ENCODE measurements at regions of chr12 and their contacts with region 1.

Region 1: DNA sequence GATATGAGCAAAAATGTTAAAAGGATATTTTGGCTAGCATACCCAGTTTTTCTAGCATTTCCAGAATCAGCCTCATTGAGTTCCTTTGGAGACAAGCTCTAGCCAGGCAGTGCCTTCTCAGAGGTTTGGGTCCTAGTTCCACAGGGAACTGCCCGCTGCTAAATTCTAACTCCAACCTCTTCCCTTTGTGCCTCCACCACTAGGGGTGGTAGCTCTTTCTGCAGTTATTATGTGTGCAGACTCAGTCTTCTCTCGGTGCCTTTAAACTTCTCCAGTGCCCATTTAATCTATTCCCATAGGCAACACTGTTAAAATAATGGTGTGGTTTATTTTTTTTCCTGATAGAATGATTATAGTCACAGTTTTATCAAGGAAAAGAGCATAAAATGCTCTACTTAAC is 21.5 kb upstream of the SLC25A3 start:
- DNase-seq: no peak
- H3K4me3 ChIP-seq: no peak overlapping the region
- H3K27me3 ChIP-seq: no peaks in the 10 kb centered on the region
- CTCF ChIP-seq: no peak; the same call in 1 of the 2 replicates

Region 2: DNA sequence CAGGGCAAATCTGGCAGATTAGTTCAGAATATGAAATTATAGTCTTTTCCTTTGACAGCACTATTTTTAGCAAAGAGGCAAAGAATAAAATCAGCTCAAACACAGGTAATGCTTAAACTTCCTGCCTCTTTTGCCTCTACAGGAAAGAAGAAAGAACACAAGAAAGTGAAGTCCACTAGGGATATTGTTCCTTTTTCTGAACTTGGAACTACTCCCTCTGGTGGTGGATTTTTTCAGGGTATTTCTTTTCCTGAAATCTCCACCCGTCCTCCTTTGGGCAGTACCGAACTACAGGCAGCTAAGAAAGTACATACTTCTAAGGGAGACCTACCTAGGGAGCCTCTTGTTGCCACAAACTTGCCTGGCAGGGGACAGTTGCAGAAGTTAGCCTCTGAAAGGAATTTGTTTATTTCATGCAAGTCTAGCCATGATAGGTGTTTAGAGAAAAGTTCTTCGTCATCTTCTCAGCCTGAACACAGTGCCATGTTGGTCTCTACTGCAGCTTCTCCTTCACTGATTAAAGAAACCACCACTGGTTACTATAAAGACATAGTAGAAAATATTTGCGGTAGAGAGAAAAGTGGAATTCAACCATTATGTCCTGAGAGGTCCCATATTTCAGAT is 39.2 kb before region 1 on chr12:
- CTCF ChIA-PET with region 1: interaction called, 11 read pairs
- POLR2A ChIA-PET with region 1: no interaction called
- DNase-seq: no peak
- H3K4me3 ChIP-seq: no peak overlapping the region
- H3K27me3 ChIP-seq: no peaks in the 10 kb centered on the region
- CTCF ChIP-seq: peak; percentile 58

Region 3: GRCh38 chr12:98550803-98551202 is 21.2 kb before region 1 on chr12:
- CTCF ChIA-PET with region 1: interaction called, 10 read pairs
- POLR2A ChIA-PET with region 1: no interaction called
- DNase-seq: no peak
- H3K4me3 ChIP-seq: no peak overlapping the region
- H3K27me3 ChIP-seq: no peaks in the 10 kb centered on the region
- CTCF ChIP-seq: no peak

Region 4: DNA sequence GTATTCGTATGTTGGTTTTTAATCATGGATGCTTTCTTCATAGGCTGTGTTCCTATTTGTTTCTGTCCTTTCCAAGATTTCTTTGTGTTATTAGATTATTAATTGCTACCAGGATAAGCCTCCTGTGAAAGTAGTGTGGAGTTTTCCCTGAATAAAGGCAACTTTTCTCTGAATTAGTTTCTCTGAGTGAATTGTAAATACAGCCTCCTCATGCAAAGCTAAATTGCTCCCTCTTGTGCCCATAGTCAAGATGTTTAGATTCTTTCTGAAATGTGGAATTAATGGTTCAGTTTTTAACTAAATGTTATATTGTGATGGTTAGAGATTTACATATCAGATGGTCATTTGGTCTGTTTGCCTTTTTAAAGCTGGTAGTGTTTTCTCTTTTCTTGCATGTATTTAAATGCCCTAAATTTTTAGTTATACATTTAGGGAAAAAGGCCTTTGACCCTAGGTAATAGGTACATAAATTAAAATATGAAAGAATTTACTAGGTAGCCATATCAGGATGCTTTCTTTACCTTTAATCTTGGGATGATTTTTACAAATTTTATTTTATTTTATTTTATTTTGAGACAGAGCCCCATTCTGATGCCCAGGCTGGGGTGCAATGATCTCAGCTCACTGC is 82.0 kb after region 1 on chr12:
- CTCF ChIA-PET with region 1: interaction called, 18 read pairs
- POLR2A ChIA-PET with region 1: no interaction called
- DNase-seq: no peak
- H3K4me3 ChIP-seq: no peak overlapping the region
- H3K27me3 ChIP-seq: no peaks in the 10 kb centered on the region
- CTCF ChIP-seq: peak; percentile 62

Region 5: GRCh38 chr12:98998697-98999299 is 426.8 kb after region 1 on chr12:
- CTCF ChIA-PET with region 1: interaction called, 11 read pairs
- POLR2A ChIA-PET with region 1: no interaction called
- DNase-seq: no peak
- H3K4me3 ChIP-seq: no peak overlapping the region
- H3K27me3 ChIP-seq: no peaks in the 10 kb centered on the region
- CTCF ChIP-seq: peak; percentile 58

Region 6: DNA sequence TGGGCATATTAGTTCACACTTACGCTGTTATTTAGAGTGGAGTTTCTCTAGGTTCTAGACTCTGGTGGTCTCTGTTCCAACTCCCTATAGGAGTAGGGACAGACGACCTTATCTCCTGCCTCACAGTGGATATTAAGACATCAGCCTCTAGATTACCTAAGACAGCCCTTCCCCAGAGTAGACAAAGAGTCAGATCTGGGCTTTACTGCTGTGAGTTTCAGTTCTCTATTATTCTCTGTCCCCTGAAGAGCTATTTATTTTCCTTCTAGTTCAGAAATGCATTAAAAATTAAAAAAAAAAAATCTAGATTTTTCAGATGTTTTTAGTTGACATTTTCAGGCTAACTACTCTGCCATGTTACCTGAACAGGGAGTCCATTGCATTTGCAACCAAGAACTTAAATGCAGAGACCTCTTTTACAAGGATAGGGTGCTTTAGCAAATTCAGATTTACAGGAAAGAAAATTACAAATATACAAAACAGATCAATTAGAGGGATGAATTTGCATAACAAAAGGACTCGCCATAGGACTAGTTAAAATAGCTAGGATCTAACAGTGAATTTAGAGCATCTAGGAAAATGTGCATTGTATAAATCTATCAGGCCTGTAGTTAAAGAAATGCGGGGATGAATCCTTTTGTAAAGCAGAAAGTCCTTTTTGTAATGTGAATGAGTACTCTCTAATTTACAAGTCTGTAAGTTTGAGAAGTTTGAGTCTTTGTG is 454.5 kb after region 1 on chr12:
- CTCF ChIA-PET with region 1: no interaction called
- POLR2A ChIA-PET with region 1: no interaction called
- DNase-seq: no peak
- H3K4me3 ChIP-seq: no peak overlapping the region
- H3K27me3 ChIP-seq: no peaks in the 10 kb centered on the region
- CTCF ChIP-seq: no peak